ENCODE measurements at regions of chr21 and their contacts with region 1.

Region 1: GRCh38 chr21:22609802-22610201 is 1611.6 kb downstream of the NCAM2 start:
- DNase-seq: no peak
- ATAC-seq: no peak
- H3K4me3 ChIP-seq: no peak overlapping the region
- H3K27ac ChIP-seq: no peak overlapping the region
- H3K4me1 ChIP-seq: no peaks in the 10 kb centered on the region
- H3K27me3 ChIP-seq: no peaks in the 10 kb centered on the region
- CTCF ChIP-seq: no peak
- POLR2A ChIP-seq: no peak

Region 2: DNA sequence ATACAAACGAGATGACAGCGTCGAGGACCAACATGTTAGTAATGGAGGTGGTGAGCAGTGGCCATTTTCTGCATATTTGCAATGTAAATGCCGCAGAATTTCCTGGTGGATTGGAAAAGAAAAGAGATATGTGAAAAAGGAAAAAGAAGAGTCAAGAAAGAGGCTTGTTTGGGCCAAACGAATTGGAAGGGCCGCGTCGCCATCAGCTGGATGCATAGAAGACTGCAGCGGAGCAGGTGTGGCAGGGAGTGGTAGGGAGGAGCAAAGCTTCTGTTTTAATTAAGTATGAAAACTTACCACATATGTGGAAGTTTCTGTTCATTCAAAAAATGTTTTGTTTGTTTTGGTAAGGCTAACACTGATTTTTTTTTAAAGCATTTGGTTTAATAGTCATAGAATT is 920.9 kb before region 1 on chr21:
- in situ Hi-C with region 1: no loop called
- intact Hi-C with region 1: loop called (anchors 10 kb)
- DNase-seq: no peak
- ATAC-seq: no peak
- H3K4me3 ChIP-seq: no peak overlapping the region
- H3K27ac ChIP-seq: no peak overlapping the region
- H3K4me1 ChIP-seq: no peaks in the 10 kb centered on the region
- H3K27me3 ChIP-seq: no peaks in the 10 kb centered on the region
- CTCF ChIP-seq: no peak
- POLR2A ChIP-seq: no peak